PC-3 (cell line): ENCODE measurements at regions of chr12 and their contacts with region 1.

Region 1: DNA sequence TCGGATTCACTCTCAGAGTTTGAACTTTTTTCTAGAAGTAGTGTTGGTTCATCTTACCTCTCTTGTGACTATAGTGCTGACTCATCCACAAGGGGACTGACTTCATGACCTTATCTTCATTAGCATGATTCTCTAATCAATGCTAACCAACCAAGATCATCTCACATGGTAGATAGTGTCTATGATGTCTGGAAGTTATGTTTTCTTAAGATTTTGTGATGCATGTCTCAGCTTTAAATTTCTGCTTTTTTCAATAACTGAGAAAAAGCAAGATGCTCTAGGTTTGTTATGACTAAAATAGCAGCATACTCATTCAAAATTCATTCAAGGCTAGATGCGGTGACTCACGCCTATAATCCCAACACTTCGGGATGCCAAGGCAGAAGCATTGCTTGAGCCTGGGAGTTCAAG is 12.3 kb upstream of the SLC35E3 start:
- DNase-seq: peak; percentile 15
- ATAC-seq: no peak
- H3K4me3 ChIP-seq: no peak overlapping the region
- H3K27ac ChIP-seq: no peak overlapping the region
- H3K4me1 ChIP-seq: no peaks in the 10 kb centered on the region
- H3K27me3 ChIP-seq: no peaks in the 10 kb centered on the region
- CTCF ChIP-seq: no peak

Region 2: DNA sequence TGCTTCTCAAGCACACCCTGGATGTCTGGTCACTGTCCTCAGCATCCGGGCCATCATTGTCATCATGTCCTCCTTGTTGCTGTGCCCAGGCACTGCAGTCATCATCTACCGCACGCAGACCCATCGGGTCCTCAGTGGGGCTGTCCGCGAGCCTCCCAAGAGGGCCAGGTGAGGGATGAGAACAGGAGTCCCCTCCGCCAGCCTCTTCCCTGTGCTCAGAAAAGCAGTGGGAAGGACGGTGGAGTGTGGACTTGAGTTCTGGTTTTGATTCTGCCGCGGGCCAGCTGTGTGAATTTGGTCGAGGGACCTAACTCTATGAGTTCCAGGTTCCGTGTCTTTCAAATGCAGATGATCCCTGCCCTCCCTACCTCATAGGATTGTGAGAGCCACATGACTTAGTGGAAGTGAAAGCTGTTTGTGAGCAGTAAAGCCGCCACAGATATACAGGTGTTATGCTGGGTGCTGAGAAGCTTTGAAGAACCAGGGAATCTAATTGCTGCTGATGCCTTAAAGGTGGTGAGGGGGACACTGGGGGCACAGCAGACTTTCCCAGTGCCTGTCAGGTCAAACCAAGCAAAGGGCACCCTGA is 245.9 kb before region 1 on chr12:
- CTCF ChIA-PET with region 1: no interaction called
- POLR2A ChIA-PET with region 1: no interaction called
- intact Hi-C with region 1: no loop called
- DNase-seq: no peak
- ATAC-seq: no peak
- H3K4me3 ChIP-seq: no peak overlapping the region
- H3K27ac ChIP-seq: no peak overlapping the region
- H3K4me1 ChIP-seq: peaks cover 11% of the 10 kb centered on the region
- H3K27me3 ChIP-seq: no peaks in the 10 kb centered on the region
- CTCF ChIP-seq: no peak

Region 3: GRCh38 chr12:68665016-68665569 is 68.6 kb before region 1 on chr12:
- CTCF ChIA-PET with region 1: no interaction called
- POLR2A ChIA-PET with region 1: no interaction called
- intact Hi-C with region 1: no loop called
- DNase-seq: no peak
- ATAC-seq: peak; percentile 24; the same call in 1 of the 2 replicates
- H3K4me3 ChIP-seq: no peak overlapping the region
- H3K27ac ChIP-seq: no peak overlapping the region
- H3K4me1 ChIP-seq: no peaks in the 10 kb centered on the region
- H3K27me3 ChIP-seq: no peaks in the 10 kb centered on the region
- CTCF ChIP-seq: peak; percentile 22; the same call in 1 of the 2 replicates

Region 4: DNA sequence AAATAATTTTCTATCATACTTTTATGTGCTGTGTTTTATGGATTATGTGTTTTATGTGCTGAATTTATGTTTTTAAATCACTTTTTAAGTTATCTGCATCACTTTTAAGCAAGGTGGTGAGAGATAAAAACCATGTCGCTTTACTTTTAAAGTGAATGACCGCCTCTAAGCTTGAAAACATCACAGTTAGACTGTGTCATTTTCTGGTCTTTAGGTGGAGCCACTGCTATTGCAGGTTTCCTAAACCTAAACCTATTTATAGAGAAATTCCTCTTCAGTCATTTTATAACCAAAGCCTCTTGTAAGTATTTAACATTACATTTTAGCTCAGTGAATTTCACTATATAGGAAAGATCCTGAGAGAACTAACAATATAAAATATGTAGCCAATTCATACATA is 53.3 kb after region 1 on chr12:
- CTCF ChIA-PET with region 1: no interaction called
- POLR2A ChIA-PET with region 1: interaction called, 15 read pairs
- intact Hi-C with region 1: no loop called
- DNase-seq: no peak
- ATAC-seq: no peak
- H3K4me3 ChIP-seq: no peak overlapping the region
- H3K27ac ChIP-seq: no peak overlapping the region
- H3K4me1 ChIP-seq: no peaks in the 10 kb centered on the region
- H3K27me3 ChIP-seq: no peaks in the 10 kb centered on the region
- CTCF ChIP-seq: peak; percentile 32; the same call in 1 of the 2 replicates